Panc1 (cell line): ENCODE measurements at regions of chr15 and their contacts with region 1.

Region 1: GRCh38 chr15:80475572-80475971 is 71.4 kb downstream of the ARNT2 start:
- DNase-seq: no peak
- ATAC-seq: no peak
- H3K4me3 ChIP-seq: no peak overlapping the region
- H3K27ac ChIP-seq: no peak overlapping the region
- H3K4me1 ChIP-seq: no peaks in the 10 kb centered on the region
- H3K27me3 ChIP-seq: no peaks in the 10 kb centered on the region; the same call in 1 of the 2 replicates
- CTCF ChIP-seq: peak; percentile 39; the same call in 1 of the 2 replicates

Region 2: DNA sequence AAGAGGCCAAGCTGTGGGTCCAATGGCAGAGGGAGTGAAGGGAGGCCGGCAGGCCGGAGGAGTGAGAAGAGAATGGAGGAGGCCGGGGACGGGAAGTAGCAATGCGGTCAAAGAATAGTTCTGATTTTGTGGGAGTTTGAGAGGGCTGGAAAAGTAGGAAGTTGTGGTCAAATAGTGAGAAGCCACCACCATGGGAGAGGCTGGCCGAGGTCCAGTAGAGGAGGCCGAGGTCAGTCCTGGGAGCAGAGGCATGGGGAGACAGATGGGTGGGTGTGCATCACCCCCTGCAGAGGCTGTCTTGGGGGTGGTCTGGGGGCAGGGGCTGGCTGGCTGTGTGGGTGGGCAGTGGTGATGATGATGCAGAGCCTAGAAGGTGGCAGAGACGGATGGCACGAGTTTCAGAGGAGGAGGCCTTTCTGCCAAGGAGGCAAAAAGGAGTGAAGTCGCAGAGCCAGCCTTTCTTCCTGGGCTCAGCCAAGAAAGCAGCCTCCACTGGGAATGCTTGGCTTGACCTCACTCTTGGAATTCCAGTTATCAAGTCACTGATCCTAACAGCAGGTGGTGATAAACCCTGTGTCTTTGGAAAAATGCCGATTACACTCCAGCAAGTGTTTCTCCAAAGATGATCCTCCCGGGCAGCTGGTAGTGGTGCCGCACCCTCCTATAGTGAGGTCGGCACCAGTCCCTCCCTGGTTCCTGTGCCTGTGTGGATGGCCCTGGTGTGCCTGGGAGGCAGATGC is 14.0 kb before region 1 on chr15:
- CTCF ChIA-PET with region 1: no interaction called
- POLR2A ChIA-PET with region 1: interaction called, 13 read pairs
- in situ Hi-C with region 1: no loop called
- intact Hi-C with region 1: no loop called
- DNase-seq: no peak
- ATAC-seq: no peak
- H3K4me3 ChIP-seq: no peak overlapping the region
- H3K27ac ChIP-seq: no peak overlapping the region
- H3K4me1 ChIP-seq: no peaks in the 10 kb centered on the region; the same call in 1 of the 2 replicates
- H3K27me3 ChIP-seq: no peaks in the 10 kb centered on the region
- CTCF ChIP-seq: no peak